ENCODE measurements at regions of chr1 and their contacts with region 1.

Region 1: GRCh38 chr1:192516776-192517297 is 58.7 kb upstream of the RGS1 start:
- DNase-seq: peak in 34 of 35 experiments; percentile 8 to 93 (median 56)
- ATAC-seq: peak; percentile 95 to 99 (median 98)
- H3K4me3 ChIP-seq: peak overlapping the region in 1 of 2 donors; percentile 9
- H3K4me3 Mint-ChIP-seq: peak overlapping the region; percentile 61 to 64 (median 61)
- H3K27ac ChIP-seq: peak overlapping the region; percentile 74
- H3K27ac Mint-ChIP-seq: peak overlapping the region; percentile 86 to 93
- H3K4me1 ChIP-seq: peaks cover 8 to 22% of the 10 kb centered on the region in 2 experiments
- H3K4me1 Mint-ChIP-seq: peaks cover 34 to 67% (median 48%) of the 10 kb centered on the region in 3 donors
- H3K27me3 ChIP-seq: no peaks in the 10 kb centered on the region
- H3K27me3 Mint-ChIP-seq: no peaks in the 10 kb centered on the region

Region 2: GRCh38 chr1:192201303-192201702 is 315.5 kb before region 1 on chr1:
- CTCF ChIA-PET with region 1: no interaction called
- POLR2A ChIA-PET with region 1: no interaction called
- DNase-seq: no peak
- ATAC-seq: no peak
- H3K4me3 ChIP-seq: no peak overlapping the region
- H3K4me3 Mint-ChIP-seq: no peak overlapping the region
- H3K27ac ChIP-seq: no peak overlapping the region
- H3K27ac Mint-ChIP-seq: no peak overlapping the region
- H3K4me1 ChIP-seq: no peaks in the 10 kb centered on the region
- H3K4me1 Mint-ChIP-seq: no peaks in the 10 kb centered on the region
- H3K27me3 ChIP-seq: no peaks in the 10 kb centered on the region
- H3K27me3 Mint-ChIP-seq: no peaks in the 10 kb centered on the region

Region 3: GRCh38 chr1:192256674-192257334 is 260.0 kb before region 1 on chr1:
- CTCF ChIA-PET with region 1: no interaction called
- POLR2A ChIA-PET with region 1: no interaction called
- DNase-seq: no peak
- ATAC-seq: no peak
- H3K4me3 ChIP-seq: no peak overlapping the region
- H3K4me3 Mint-ChIP-seq: no peak overlapping the region
- H3K27ac ChIP-seq: no peak overlapping the region
- H3K27ac Mint-ChIP-seq: no peak overlapping the region
- H3K4me1 ChIP-seq: no peaks in the 10 kb centered on the region
- H3K4me1 Mint-ChIP-seq: no peaks in the 10 kb centered on the region
- H3K27me3 ChIP-seq: no peaks in the 10 kb centered on the region
- H3K27me3 Mint-ChIP-seq: no peaks in the 10 kb centered on the region

Region 4: DNA sequence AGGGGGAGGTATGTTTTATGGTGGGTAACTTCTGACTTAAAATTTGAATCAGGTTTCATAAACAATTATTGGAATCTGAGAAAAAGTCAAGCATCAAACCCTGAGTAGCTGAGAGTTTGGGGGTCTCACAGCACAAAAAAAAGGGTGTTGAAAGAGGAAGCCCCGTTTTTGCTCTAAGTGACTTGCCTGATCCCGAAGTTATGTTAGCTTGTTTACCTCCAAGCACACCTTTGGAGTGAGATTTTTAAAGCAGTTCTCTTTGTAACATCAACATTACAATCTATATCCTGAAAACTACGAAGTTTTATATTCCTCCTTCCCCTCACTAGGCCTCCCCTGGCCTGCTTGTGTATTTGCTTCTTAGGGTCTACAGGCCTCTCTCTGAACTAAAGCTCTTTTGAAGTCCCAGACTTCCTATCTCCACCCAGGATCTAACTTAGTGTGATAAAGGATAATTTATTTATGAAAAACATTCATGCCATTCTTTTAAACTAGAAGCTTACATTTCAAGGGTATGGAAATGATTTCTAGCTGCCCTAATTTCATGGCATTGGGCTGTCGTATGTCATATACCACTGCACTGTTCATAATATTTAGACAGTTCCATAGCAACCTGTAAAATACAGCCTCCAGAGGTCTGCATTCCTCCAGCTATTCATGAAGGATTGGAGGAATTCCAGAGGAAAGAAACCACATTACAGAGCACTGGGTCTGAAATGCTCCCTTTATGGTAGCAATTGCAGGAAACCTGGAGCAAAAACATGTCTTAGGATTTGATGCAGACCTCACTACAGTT is 22.7 kb after region 1 on chr1:
- CTCF ChIA-PET with region 1: interaction called, 4 to 18 read pairs
- POLR2A ChIA-PET with region 1: interaction called, 7 to 27 read pairs
- DNase-seq: peak in 2 of 35 experiments; percentile 24 to 37
- ATAC-seq: peak in 2 of 4 experiments; percentile 33 to 39
- H3K4me3 ChIP-seq: no peak overlapping the region
- H3K4me3 Mint-ChIP-seq: peak overlapping the region; percentile 10 to 49 (median 39)
- H3K27ac ChIP-seq: peak overlapping the region; percentile 72
- H3K27ac Mint-ChIP-seq: peak overlapping the region; percentile 88 to 94
- H3K4me1 ChIP-seq: peaks cover 8 to 10% of the 10 kb centered on the region in 2 experiments
- H3K4me1 Mint-ChIP-seq: peaks cover 30 to 62% (median 33%) of the 10 kb centered on the region in 3 donors
- H3K27me3 ChIP-seq: no peaks in the 10 kb centered on the region
- H3K27me3 Mint-ChIP-seq: no peaks in the 10 kb centered on the region

Region 5: DNA sequence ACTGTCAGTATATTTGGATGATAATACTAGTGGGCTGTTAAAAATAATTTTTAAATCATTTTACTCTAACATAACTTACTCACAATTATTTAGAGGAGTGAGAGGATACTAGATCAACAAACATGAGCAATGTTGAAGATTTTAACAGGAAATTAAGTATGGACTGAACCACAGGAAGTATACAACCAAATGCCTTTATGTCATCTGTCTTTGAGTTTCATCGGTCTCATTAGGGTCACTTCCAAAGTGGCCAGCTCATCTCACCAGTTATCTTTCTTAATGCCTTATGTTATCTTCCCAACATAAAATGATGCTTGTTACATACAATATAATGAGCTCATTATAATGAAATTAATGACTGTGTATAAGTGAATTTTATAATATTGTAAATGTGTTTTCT is 57.2 kb after region 1 on chr1:
- CTCF ChIA-PET with region 1: interaction called, 6 to 16 read pairs
- POLR2A ChIA-PET with region 1: interaction called, 21 to 31 read pairs
- DNase-seq: no peak
- ATAC-seq: no peak
- H3K4me3 ChIP-seq: no peak overlapping the region
- H3K4me3 Mint-ChIP-seq: no peak overlapping the region
- H3K27ac ChIP-seq: peak overlapping the region; percentile 62
- H3K27ac Mint-ChIP-seq: peak overlapping the region in 1 of 2 donors; percentile 78
- H3K4me1 ChIP-seq: peaks cover 12 to 49% of the 10 kb centered on the region in 2 experiments
- H3K4me1 Mint-ChIP-seq: peaks cover 66 to 79% (median 77%) of the 10 kb centered on the region in 3 donors
- H3K27me3 ChIP-seq: no peaks in the 10 kb centered on the region
- H3K27me3 Mint-ChIP-seq: no peaks in the 10 kb centered on the region

Region 6: GRCh38 chr1:192808518-192809306 is 291.9 kb after region 1 on chr1 and contains the start of gene RGS2:
- CTCF ChIA-PET with region 1: interaction called in 1 of 2 experiments, 12 read pairs
- POLR2A ChIA-PET with region 1: interaction called in 1 of 2 experiments, 5 read pairs
- DNase-seq: peak; percentile 74 to 93 (median 85)
- ATAC-seq: peak; percentile 92 to 97 (median 95)
- H3K4me3 ChIP-seq: peak within 1 kb of the TSS; percentile 81 to 87
- H3K4me3 Mint-ChIP-seq: peak within 1 kb of the TSS; percentile 97 to 98 (median 97)
- H3K27ac ChIP-seq: peak within 1 kb of the TSS; percentile 77
- H3K27ac Mint-ChIP-seq: peak within 1 kb of the TSS; percentile 92 to 97
- H3K4me1 ChIP-seq: peaks cover 2 to 18% of the 10 kb centered on the region in 2 experiments
- H3K4me1 Mint-ChIP-seq: peaks cover 33 to 41% (median 34%) of the 10 kb centered on the region in 3 donors
- H3K27me3 ChIP-seq: no peaks in the 10 kb centered on the region
- H3K27me3 Mint-ChIP-seq: no peaks in the 10 kb centered on the region
- total RNA-seq, gene RGS2: 13.9 to 129 (median 20.7) TPM